Caco-2 (cell line): ENCODE measurements at regions of chr1 and their contacts with region 1.

Region 1: DNA sequence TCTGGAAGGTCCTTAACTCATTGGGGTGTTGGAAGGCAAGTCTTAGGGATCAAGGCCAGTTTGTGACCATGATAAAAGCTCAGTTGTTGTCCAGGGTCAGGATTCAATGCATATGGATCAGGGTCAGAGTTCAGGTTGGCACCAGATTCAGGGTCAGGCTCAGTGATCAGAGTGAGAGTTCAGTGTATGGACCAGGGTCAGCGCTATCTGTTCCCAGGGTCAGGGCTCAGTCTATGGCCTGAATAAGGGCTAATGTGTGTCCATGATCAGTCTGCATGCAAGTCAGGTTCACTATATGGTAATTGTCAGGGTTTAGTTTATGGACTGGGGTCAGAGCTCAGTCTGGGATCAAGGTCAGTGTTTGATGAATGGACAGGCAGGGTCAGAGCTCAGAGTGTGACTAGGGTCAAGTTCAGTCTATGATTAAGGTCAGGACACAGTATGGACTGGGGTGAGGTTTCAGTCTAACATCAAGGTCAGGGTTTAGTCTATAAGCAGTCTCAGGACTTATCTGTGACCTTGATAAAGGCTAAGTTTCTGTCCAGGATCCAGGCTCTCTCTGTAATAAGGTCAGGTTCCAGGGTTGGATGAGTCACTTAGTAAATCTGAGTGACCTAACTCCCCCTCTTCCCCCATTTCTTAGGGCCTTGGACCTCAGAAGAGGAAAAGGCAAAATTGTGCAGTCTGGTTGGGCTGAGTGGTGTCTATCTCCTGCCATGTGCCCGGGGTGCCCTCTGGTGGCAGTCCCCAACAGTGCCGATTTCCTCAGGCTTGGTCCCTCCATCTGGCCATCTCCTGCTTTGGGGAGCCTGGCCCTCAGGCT is 23.8 kb downstream of the KNCN start:
- DNase-seq: peak; percentile 65 to 81
- H3K4me3 ChIP-seq: no peak overlapping the region
- H3K4me3 Mint-ChIP-seq: no peak overlapping the region
- H3K27ac Mint-ChIP-seq: no peak overlapping the region
- H3K4me1 ChIP-seq: no peaks in the 10 kb centered on the region
- H3K4me1 Mint-ChIP-seq: peaks cover 6% of the 10 kb centered on the region
- H3K27me3 ChIP-seq: no peaks in the 10 kb centered on the region
- H3K27me3 Mint-ChIP-seq: peaks cover 8% of the 10 kb centered on the region
- CTCF ChIP-seq: peak; percentile 68 to 93

Region 2: GRCh38 chr1:46425726-46426125 is 102.0 kb before region 1 on chr1:
- CTCF ChIA-PET with region 1: no interaction called
- POLR2A ChIA-PET with region 1: no interaction called
- intact Hi-C with region 1: no loop called
- DNase-seq: no peak
- H3K4me3 ChIP-seq: no peak overlapping the region
- H3K4me3 Mint-ChIP-seq: no peak overlapping the region
- H3K27ac Mint-ChIP-seq: no peak overlapping the region
- H3K4me1 ChIP-seq: no peaks in the 10 kb centered on the region
- H3K4me1 Mint-ChIP-seq: no peaks in the 10 kb centered on the region
- H3K27me3 ChIP-seq: no peaks in the 10 kb centered on the region
- H3K27me3 Mint-ChIP-seq: peaks cover 5% of the 10 kb centered on the region
- CTCF ChIP-seq: no peak

Region 3: GRCh38 chr1:46446646-46447498 is 80.8 kb before region 1 on chr1:
- CTCF ChIA-PET with region 1: interaction called, 17 read pairs
- POLR2A ChIA-PET with region 1: interaction called, 3 read pairs
- intact Hi-C with region 1: loop called (anchors 1 kb)
- DNase-seq: peak; percentile 77 to 84
- H3K4me3 ChIP-seq: no peak overlapping the region
- H3K4me3 Mint-ChIP-seq: no peak overlapping the region
- H3K27ac Mint-ChIP-seq: no peak overlapping the region
- H3K4me1 ChIP-seq: 0 out of 2 replicates have a peak, but pooled peaks cover 4% of the 10 kb centered on the region
- H3K4me1 Mint-ChIP-seq: peaks cover 5% of the 10 kb centered on the region
- H3K27me3 ChIP-seq: no peaks in the 10 kb centered on the region
- H3K27me3 Mint-ChIP-seq: peaks cover 4% of the 10 kb centered on the region
- CTCF ChIP-seq: peak; percentile 79 to 83

Region 4: GRCh38 chr1:46747683-46748288 is 220.1 kb after region 1 on chr1:
- CTCF ChIA-PET with region 1: no interaction called
- POLR2A ChIA-PET with region 1: no interaction called
- intact Hi-C with region 1: no loop called
- DNase-seq: peak; percentile 61 to 66
- H3K4me3 ChIP-seq: no peak overlapping the region
- H3K4me3 Mint-ChIP-seq: no peak overlapping the region
- H3K27ac Mint-ChIP-seq: no peak overlapping the region
- H3K4me1 ChIP-seq: no peaks in the 10 kb centered on the region
- H3K4me1 Mint-ChIP-seq: peaks cover 6% of the 10 kb centered on the region
- H3K27me3 ChIP-seq: no peaks in the 10 kb centered on the region
- H3K27me3 Mint-ChIP-seq: peaks cover 6% of the 10 kb centered on the region
- CTCF ChIP-seq: peak; percentile 44 to 80